ENCODE measurements at regions of chr4 and their contacts with region 1.

Region 1: DNA sequence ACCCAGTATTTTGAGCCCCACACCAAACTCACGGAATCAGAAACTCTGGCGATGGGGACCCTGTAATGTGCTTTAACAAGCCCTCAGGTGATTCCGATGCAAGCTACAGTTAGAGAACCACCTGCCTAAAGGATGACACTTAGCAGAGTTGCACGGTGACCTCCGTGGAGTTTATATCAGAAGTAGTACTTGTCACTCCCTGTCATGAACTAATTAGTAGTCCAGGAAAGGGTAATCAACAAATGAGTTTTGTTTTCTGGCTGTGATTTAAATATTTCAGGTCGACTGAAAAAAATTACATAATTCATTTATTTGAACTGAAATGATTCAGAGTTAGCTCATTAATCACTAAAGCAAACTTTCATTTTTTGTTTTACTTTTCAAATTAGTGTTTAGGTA is 56.4 kb downstream of the TMA16 start:
- DNase-seq: no peak
- ATAC-seq: no peak
- H3K4me3 Mint-ChIP-seq: no peak overlapping the region
- H3K27ac Mint-ChIP-seq: no peak overlapping the region
- H3K4me1 Mint-ChIP-seq: peaks cover 10% of the 10 kb centered on the region
- H3K27me3 Mint-ChIP-seq: no peaks in the 10 kb centered on the region

Region 2: GRCh38 chr4:163309466-163309865 is 241.4 kb before region 1 on chr4:
- CTCF ChIA-PET with region 1: no interaction called
- DNase-seq: no peak
- ATAC-seq: no peak
- H3K4me3 Mint-ChIP-seq: no peak overlapping the region
- H3K27ac Mint-ChIP-seq: no peak overlapping the region
- H3K4me1 Mint-ChIP-seq: no peaks in the 10 kb centered on the region
- H3K27me3 Mint-ChIP-seq: peaks cover 2% of the 10 kb centered on the region

Region 3: DNA sequence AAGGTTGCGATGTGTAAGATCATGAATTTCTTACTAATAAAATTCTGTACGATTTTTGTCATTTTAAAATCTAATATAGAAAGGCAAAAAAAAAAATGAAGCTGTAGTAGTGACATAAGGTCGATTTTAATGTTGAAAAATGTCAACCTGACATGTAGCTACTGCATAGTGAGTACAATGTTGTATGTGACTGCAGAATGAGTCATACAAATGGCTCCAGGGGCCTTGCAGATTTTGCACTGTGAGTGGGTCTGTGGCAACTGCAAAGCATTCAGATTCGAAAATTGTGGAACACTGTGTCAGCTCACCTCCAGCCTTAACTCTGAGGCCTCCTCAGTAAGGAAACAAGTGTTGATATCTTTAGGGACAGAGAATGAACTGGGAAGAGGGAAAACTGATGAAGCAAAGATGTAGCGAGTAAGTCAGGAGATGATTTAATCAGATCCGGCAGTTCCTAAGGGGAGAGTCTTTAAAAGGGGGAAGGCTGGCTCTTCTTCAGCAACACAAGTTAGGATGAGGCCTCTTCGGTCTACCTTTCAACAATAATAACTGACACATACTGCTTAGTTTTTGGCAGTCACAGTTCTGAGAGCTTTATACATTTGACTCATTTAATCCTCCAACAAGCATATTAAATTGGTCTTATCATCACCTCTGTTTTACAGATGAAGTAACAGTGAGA is 102.2 kb before region 1 on chr4:
- CTCF ChIA-PET with region 1: no interaction called
- DNase-seq: no peak
- ATAC-seq: no peak
- H3K4me3 Mint-ChIP-seq: no peak overlapping the region
- H3K27ac Mint-ChIP-seq: no peak overlapping the region
- H3K4me1 Mint-ChIP-seq: no peaks in the 10 kb centered on the region
- H3K27me3 Mint-ChIP-seq: peaks cover 9% of the 10 kb centered on the region

Region 4: DNA sequence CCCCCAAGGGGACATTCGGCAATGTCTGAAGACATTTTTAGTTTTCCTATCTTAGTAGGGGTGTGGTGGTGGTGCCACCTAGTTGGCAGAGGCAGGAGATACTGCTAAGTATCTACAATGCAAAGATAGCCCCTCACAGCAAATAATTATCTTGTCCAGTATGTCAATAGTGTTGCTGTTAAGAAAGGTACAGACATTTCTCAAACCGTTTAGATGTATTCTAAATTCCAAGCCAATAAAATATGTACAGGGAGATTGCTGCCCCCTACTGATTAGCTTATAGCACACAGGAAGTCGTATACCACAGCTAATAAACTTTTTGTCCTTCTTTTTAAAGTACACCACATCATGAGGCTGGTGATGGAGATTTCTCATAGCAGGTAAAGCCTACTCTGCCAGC is 204.1 kb after region 1 on chr4:
- CTCF ChIA-PET with region 1: interaction called, 11 read pairs
- DNase-seq: no peak
- ATAC-seq: no peak
- H3K4me3 Mint-ChIP-seq: no peak overlapping the region
- H3K27ac Mint-ChIP-seq: no peak overlapping the region
- H3K4me1 Mint-ChIP-seq: no peaks in the 10 kb centered on the region
- H3K27me3 Mint-ChIP-seq: no peaks in the 10 kb centered on the region

Region 5: DNA sequence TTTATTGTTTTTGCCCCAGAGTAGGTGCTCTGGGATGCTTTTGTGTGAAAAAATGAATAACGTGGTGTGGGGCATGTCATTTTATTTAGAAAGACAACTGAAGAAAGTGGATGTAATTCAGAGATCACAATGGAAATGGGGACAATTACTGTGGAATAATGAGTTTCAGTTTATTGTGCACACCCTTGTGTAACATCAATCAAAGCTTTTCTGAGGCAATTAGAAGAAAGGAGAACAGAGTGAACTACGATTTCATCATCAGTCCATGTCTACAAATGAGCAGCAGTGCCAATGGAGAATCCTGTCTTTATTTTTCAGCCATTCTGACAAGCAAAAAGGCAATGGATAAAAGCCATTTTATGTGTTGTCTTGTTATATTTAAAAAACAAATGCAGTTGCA is 282.8 kb after region 1 on chr4:
- CTCF ChIA-PET with region 1: no interaction called
- DNase-seq: no peak
- ATAC-seq: no peak
- H3K4me3 Mint-ChIP-seq: no peak overlapping the region
- H3K27ac Mint-ChIP-seq: no peak overlapping the region
- H3K4me1 Mint-ChIP-seq: no peaks in the 10 kb centered on the region
- H3K27me3 Mint-ChIP-seq: no peaks in the 10 kb centered on the region

Region 6: DNA sequence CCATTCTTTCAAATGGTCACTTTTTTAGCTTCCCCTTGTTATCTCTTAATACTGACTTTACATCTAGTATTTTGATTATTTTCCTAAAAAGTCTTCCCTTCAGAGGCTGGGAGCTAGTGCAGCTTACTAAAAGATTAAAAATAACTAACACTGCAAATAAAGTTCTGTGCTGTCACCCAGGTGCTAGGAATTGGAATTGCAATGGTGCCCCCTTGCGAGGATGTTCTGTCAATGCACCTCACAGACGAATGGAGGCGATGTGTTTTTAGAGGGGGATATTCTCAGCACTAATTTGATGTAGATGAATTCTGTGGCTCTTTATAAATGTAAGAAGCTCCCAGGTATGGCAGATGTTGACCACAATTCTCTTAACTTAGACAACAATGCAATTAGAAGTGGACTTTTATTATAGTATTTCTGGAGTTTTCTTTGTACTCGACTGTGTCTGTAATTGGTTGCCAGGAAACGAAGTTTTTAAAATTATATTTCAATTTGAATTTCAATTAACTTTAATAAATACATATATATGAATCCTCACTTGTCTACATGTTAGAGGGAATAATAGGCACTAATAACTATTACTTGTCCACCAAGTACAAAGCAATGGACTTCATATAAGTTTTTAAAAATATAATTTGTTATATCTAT is 1181.1 kb after region 1 on chr4:
- CTCF ChIA-PET with region 1: interaction called, 19 read pairs
- DNase-seq: peak; percentile 51
- ATAC-seq: no peak
- H3K4me3 Mint-ChIP-seq: no peak overlapping the region
- H3K27ac Mint-ChIP-seq: no peak overlapping the region
- H3K4me1 Mint-ChIP-seq: peaks cover 3% of the 10 kb centered on the region
- H3K27me3 Mint-ChIP-seq: peaks cover 7% of the 10 kb centered on the region